ENCODE measurements at regions of chr5 and their contacts with region 1.

Region 1: GRCh38 chr5:123438902-123439301 is 15.7 kb upstream of the CEP120 start:
- DNase-seq: peak; percentile 58
- ATAC-seq: peak; percentile 76
- H3K4me3 Mint-ChIP-seq: peak overlapping the region; percentile 24
- H3K27ac Mint-ChIP-seq: peak overlapping the region; percentile 83
- H3K4me1 Mint-ChIP-seq: peaks cover 32% of the 10 kb centered on the region
- H3K27me3 Mint-ChIP-seq: peaks cover 2% of the 10 kb centered on the region

Region 2: DNA sequence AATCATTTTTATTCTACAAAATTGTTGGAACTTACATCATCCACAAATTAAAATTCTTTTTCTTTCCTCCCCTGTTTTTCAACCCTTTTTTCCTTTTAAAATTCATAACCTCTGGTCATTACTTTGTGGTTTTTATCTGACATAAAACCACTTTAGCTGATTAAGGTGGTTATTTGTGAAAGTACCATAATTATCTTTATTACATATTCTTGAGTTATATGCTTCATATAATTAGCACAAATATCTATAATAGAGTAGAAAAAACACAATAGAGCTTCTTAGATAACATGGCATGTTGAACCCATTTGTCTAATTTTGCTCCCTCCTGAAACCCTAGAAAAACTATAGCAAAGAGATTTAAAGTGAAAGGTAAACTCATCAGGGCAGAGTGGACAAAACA is 379.4 kb before region 1 on chr5:
- CTCF ChIA-PET with region 1: no interaction called
- POLR2A ChIA-PET with region 1: no interaction called
- intact Hi-C with region 1: no loop called
- DNase-seq: no peak
- ATAC-seq: no peak
- H3K4me3 Mint-ChIP-seq: no peak overlapping the region
- H3K27ac Mint-ChIP-seq: no peak overlapping the region
- H3K4me1 Mint-ChIP-seq: no peaks in the 10 kb centered on the region
- H3K27me3 Mint-ChIP-seq: peaks cover 8% of the 10 kb centered on the region

Region 3: GRCh38 chr5:123450640-123451039 is 11.7 kb after region 1 on chr5:
- CTCF ChIA-PET with region 1: interaction called, 3 read pairs
- POLR2A ChIA-PET with region 1: interaction called, 6 read pairs
- intact Hi-C with region 1: loop called (anchors 1 kb)
- DNase-seq: no peak
- ATAC-seq: no peak
- H3K4me3 Mint-ChIP-seq: no peak overlapping the region
- H3K27ac Mint-ChIP-seq: no peak overlapping the region
- H3K4me1 Mint-ChIP-seq: peaks cover 33% of the 10 kb centered on the region
- H3K27me3 Mint-ChIP-seq: peaks cover 9% of the 10 kb centered on the region

Region 4: GRCh38 chr5:123460296-123460729 is 21.4 kb after region 1 on chr5:
- CTCF ChIA-PET with region 1: no interaction called
- POLR2A ChIA-PET with region 1: interaction called, 3 read pairs
- intact Hi-C with region 1: loop called (anchors 1 kb)
- DNase-seq: peak; percentile 61
- ATAC-seq: peak; percentile 97
- H3K4me3 Mint-ChIP-seq: no peak overlapping the region
- H3K27ac Mint-ChIP-seq: peak overlapping the region; percentile 90
- H3K4me1 Mint-ChIP-seq: peaks cover 17% of the 10 kb centered on the region
- H3K27me3 Mint-ChIP-seq: no peaks in the 10 kb centered on the region

Region 5: DNA sequence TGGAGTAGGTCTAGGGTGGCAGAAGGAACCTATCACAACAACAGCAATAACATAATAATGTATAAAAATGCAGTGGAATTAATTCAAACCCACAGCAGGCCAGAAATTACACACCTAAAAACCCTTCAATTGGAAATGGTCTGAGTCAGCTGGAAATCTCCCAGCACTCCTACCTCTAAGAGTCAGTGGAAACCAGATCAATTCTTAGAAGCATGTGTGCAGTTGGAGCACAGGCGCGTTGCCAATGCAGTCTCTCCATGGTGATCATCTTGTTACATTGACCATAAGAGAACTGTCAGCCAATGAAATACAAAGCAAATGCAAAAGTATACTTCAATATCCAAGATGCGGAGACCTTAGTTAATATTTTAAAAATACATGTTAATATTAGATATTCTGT is 58.0 kb after region 1 on chr5:
- CTCF ChIA-PET with region 1: no interaction called
- POLR2A ChIA-PET with region 1: no interaction called
- intact Hi-C with region 1: no loop called
- DNase-seq: peak; percentile 20
- ATAC-seq: peak; percentile 60
- H3K4me3 Mint-ChIP-seq: no peak overlapping the region
- H3K27ac Mint-ChIP-seq: no peak overlapping the region
- H3K4me1 Mint-ChIP-seq: peaks cover 4% of the 10 kb centered on the region
- H3K27me3 Mint-ChIP-seq: peaks cover 5% of the 10 kb centered on the region

Region 6: GRCh38 chr5:123624132-123624531 is 185.2 kb after region 1 on chr5:
- CTCF ChIA-PET with region 1: no interaction called
- POLR2A ChIA-PET with region 1: no interaction called
- intact Hi-C with region 1: no loop called
- DNase-seq: no peak
- ATAC-seq: no peak
- H3K4me3 Mint-ChIP-seq: no peak overlapping the region
- H3K27ac Mint-ChIP-seq: no peak overlapping the region
- H3K4me1 Mint-ChIP-seq: no peaks in the 10 kb centered on the region
- H3K27me3 Mint-ChIP-seq: peaks cover 4% of the 10 kb centered on the region

Measured in activated CD4-positive, alpha-beta T cell treated with anti-CD3 and anti-CD28 coated beads for 36 hours (primary cell).